ENCODE measurements at regions of chr10 and their contacts with region 1.

Region 1: GRCh38 chr10:73940634-73941221 is 29.8 kb downstream of the PLAU start:
- DNase-seq: peak; percentile 93
- ATAC-seq: peak; percentile 97

Region 2: DNA sequence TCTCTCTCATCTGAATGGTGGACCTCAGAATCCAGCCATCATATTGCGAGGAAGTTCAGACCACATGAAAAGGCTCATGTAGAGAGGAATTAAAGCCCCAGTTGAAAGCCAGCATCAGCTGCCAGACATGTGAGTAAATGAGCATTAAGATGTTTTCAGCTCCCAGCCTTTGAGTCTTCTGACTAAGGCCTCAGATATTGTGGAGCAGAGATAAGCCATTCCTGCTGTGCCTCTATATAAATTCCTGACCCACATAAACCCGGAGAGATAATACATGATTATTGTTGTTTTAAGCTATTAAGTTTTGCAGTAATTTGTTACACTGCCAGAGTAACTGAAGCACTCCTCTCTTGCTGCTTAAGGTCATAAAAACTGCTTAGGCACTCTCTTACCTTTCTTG is 758.2 kb before region 1 on chr10:
- intact Hi-C with region 1: no loop called
- DNase-seq: no peak
- ATAC-seq: no peak

Region 3: GRCh38 chr10:73886085-73886529 is 54.6 kb before region 1 on chr10:
- intact Hi-C with region 1: loop called (anchors 5 kb)
- DNase-seq: peak; percentile 84
- ATAC-seq: peak; percentile 92